Heart left ventricle (tissue), 16 donors: ENCODE measurements at regions of chr6 and their contacts with region 1.

Region 1: GRCh38 chr6:167832497-167833395 is 6.0 kb downstream of the AFDN start:
- DNase-seq: no peak
- ATAC-seq: peak in 2 of 4 donors; percentile 41 to 45
- H3K4me3 ChIP-seq: peak overlapping the region in 1 of 12 donors; percentile 23
- H3K27ac ChIP-seq: peak overlapping the region in 1 of 12 donors; percentile 65
- H3K4me1 ChIP-seq: peaks cover 0 to 71% (median 37%) of the 10 kb centered on the region in 12 donors
- H3K27me3 ChIP-seq: peaks cover 0 to 16% (median 0%) of the 10 kb centered on the region in 9 donors
- CTCF ChIP-seq: no peak
- POLR2A ChIP-seq: no peak

Region 2: GRCh38 chr6:167285077-167285770 is 547.5 kb before region 1 on chr6:
- intact Hi-C with region 1: no loop called
- DNase-seq: no peak
- ATAC-seq: peak in 1 of 4 donors; percentile 11
- H3K4me3 ChIP-seq: no peak overlapping the region
- H3K27ac ChIP-seq: no peak overlapping the region
- H3K4me1 ChIP-seq: no peaks in the 10 kb centered on the region
- H3K27me3 ChIP-seq: no peaks in the 10 kb centered on the region
- CTCF ChIP-seq: no peak
- POLR2A ChIP-seq: no peak

Region 3: DNA sequence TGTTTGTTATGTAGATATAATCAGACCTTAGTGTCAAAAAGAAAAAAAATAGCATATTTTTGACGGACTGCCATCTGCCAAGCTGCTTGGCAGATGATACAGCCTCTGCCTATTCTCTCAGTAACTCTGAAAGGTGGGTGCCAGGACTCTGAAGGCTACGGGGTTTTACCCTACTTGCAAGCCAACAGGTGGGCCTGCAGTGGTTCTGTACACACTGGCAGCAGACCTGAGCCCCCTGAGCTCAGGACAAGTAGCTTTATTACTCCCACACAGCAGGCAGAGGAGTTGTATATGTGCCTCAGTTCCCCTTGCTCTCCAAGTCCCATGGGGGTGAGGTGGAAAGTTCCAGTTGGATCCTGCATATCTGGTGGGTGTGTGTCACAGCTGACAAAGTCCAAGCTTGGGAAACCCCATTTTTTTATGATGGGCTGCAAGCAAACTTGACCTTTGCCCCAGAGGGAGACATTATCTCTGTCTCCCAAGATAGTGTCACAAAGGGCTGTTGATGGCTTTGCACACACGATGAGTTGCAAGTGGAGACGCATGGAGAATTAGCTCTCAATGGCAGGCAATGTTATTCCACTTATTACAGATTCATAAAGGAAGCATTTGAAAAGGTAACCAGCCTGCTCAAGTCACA is 26.6 kb before region 1 on chr6:
- intact Hi-C with region 1: loop called in 1 of 10 experiments (anchors 1 kb)
- DNase-seq: no peak
- ATAC-seq: no peak
- H3K4me3 ChIP-seq: peak overlapping the region in 1 of 12 donors; percentile 11
- H3K27ac ChIP-seq: no peak overlapping the region
- H3K4me1 ChIP-seq: no peaks in the 10 kb centered on the region
- H3K27me3 ChIP-seq: no peaks in the 10 kb centered on the region
- CTCF ChIP-seq: no peak
- POLR2A ChIP-seq: no peak